Mammary epithelial cell (primary cell): ENCODE measurements at regions of chr18 and their contacts with region 1.

Region 1: DNA sequence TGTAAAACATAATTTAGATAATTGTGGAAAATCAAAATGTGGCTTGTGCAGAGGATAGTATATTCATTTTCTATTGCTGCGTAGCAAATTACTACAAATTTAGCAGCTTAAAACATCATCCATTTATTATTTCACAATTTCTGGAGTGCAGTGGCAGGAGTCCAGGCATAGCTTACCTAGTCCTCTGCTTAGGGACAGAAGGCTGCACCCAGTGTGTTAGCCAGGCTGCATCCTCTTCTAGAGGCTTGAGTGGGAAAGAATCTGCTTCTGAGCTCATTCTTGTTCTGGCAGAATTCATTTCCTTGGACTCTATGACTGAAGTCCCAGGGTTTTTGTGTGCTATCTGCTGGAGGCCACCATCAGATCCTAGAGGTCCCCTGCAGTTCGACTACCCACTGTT is 39.7 kb downstream of the MRO start:
- DNase-seq: no peak
- H3K4me3 ChIP-seq: no peak overlapping the region
- H3K27ac ChIP-seq: no peak overlapping the region
- H3K4me1 ChIP-seq: no peaks in the 10 kb centered on the region
- H3K27me3 ChIP-seq: peaks cover 2% of the 10 kb centered on the region
- CTCF ChIP-seq: no peak

Region 2: GRCh38 chr18:50614838-50615237 is 165.3 kb before region 1 on chr18:
- CTCF ChIA-PET with region 1: no interaction called
- dilution Hi-C with region 1: no loop called
- in situ Hi-C with region 1: no loop called
- intact Hi-C with region 1: no loop called
- DNase-seq: peak; percentile 99
- H3K4me3 ChIP-seq: no peak overlapping the region
- H3K27ac ChIP-seq: peak overlapping the region; percentile 70
- H3K4me1 ChIP-seq: peaks cover 11% of the 10 kb centered on the region
- H3K27me3 ChIP-seq: no peaks in the 10 kb centered on the region
- CTCF ChIP-seq: no peak

Region 3: GRCh38 chr18:50674307-50674706 is 105.8 kb before region 1 on chr18:
- CTCF ChIA-PET with region 1: no interaction called
- dilution Hi-C with region 1: no loop called
- in situ Hi-C with region 1: no loop called
- intact Hi-C with region 1: loop called (anchors 5 kb)
- DNase-seq: no peak
- H3K4me3 ChIP-seq: no peak overlapping the region
- H3K27ac ChIP-seq: no peak overlapping the region
- H3K4me1 ChIP-seq: no peaks in the 10 kb centered on the region
- H3K27me3 ChIP-seq: peaks cover 3% of the 10 kb centered on the region
- CTCF ChIP-seq: no peak